Gastrocnemius medialis (tissue), 4 donors: ENCODE measurements at regions of chr11 and their contacts with region 1.

Region 1: DNA sequence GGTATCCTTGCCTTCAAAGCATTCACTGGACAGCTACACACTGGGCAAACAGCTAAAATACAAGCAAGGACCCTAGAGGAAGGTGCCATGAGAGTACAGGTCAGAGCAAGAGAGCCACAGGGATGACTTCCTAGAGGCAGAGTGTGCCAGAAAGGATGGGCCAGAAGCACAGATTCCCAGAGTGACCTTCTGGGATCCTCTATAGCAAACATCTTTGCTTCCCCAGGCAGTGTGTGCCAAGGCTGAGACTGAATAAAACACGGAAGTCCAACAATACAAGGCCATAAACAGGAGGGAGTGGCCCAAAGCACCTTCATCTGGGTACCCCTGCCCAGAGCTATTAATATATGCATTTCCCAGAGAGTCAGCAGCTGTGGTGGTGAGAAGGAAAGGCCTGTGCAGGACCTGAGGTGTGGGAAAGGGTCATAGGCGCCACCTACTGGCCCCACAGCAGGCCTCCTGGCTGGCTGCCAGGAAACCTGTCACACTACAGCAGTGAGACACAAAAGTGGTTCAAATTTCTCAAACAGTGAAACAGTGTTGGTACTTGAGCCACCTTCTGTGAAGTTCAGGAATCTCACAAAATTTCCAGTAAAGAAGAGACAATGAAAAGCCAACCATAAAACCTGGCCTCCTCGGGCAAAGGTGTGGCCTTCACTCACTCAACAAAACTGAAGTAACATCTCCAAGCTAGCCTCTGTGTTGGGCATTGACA is 20.3 kb downstream of the CLPB start:
- DNase-seq: peak; percentile 70 to 77
- ATAC-seq: peak; percentile 82 to 93
- H3K4me3 ChIP-seq: no peak overlapping the region
- H3K27ac ChIP-seq: peak overlapping the region in 1 of 4 donors; percentile 45
- H3K4me1 ChIP-seq: peaks cover 11 to 17% of the 10 kb centered on the region in 2 donors
- H3K27me3 ChIP-seq: no peaks in the 10 kb centered on the region
- CTCF ChIP-seq: peak; percentile 79 to 90 (median 82)
- POLR2A ChIP-seq: no peak

Region 2: DNA sequence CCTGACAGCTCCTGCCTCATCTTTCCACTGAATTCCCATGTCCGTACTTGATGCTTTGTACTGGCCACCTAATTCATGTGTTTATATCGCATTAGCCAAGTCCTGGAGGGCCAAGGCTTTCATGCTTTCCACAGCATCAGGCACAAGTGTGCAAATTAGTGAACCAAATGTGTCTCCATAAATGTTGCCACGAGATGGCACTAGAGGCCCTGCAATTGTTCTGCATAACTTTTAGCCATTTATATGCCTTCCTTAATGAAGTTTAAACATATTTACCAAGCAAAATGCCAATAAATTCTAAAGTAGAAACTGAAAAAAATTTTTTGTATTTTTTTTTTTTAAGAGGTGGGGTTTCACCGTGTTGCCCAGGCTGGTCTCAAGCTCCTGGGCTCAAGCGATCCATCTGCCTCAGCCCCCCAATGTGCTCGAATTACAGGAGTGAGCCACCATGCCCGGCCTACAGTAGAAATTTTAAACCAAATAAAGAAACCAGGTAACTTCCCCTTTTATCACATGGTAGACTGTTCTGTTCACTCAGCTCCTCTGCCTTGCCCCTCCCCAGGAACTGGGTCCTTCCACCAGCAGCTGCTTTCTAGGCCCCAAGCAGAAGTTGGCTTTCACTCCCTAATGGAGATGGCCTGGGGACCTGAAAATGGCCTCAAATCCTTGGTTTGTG is 436.2 kb before region 1 on chr11:
- in situ Hi-C with region 1: loop called in 1 of 4 experiments (anchors 25 kb)
- intact Hi-C with region 1: loop called (anchors 10 kb)
- DNase-seq: peak in 1 of 2 donors; percentile 45
- ATAC-seq: peak; percentile 54 to 79
- H3K4me3 ChIP-seq: no peak overlapping the region
- H3K27ac ChIP-seq: no peak overlapping the region
- H3K4me1 ChIP-seq: peaks cover 3 to 8% of the 10 kb centered on the region in 2 donors
- H3K27me3 ChIP-seq: no peaks in the 10 kb centered on the region
- CTCF ChIP-seq: peak; percentile 39 to 75 (median 69)
- POLR2A ChIP-seq: no peak

Region 3: DNA sequence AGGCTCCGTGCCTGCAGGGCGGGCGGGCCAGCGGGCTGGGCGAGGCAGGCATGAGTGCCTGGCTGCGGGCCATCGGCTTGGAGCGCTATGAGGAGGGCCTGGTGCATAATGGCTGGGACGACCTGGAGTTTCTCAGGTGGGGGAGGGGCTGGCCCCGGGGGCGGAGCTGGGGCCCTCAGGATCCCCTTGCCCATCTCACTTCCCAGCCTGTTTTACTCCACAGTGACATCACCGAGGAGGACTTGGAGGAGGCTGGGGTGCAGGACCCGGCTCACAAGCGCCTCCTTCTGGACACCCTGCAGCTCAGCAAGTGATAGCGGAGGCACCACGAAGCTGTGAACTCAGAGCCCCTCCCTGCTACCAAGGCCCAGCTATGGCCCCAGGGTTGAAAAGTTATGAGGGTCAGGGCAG is 176.0 kb before region 1 on chr11:
- in situ Hi-C with region 1: no loop called
- intact Hi-C with region 1: loop called (anchors 5 kb)
- DNase-seq: peak in 1 of 2 donors; percentile 27
- ATAC-seq: no peak
- H3K4me3 ChIP-seq: no peak overlapping the region
- H3K27ac ChIP-seq: no peak overlapping the region
- H3K4me1 ChIP-seq: peaks cover 10 to 22% of the 10 kb centered on the region in 2 donors
- H3K27me3 ChIP-seq: peaks cover 8 to 17% (median 15%) of the 10 kb centered on the region in 3 donors
- CTCF ChIP-seq: peak in 4 of 5 experiments; percentile 34 to 53 (median 50)
- POLR2A ChIP-seq: no peak

Region 4: GRCh38 chr11:72328366-72329224 is 85.5 kb before region 1 on chr11:
- in situ Hi-C with region 1: no loop called
- intact Hi-C with region 1: loop called (anchors 1 kb)
- DNase-seq: no peak
- ATAC-seq: no peak
- H3K4me3 ChIP-seq: no peak overlapping the region
- H3K27ac ChIP-seq: no peak overlapping the region
- H3K4me1 ChIP-seq: peaks cover 21 to 26% of the 10 kb centered on the region in 2 donors
- H3K27me3 ChIP-seq: no peaks in the 10 kb centered on the region
- CTCF ChIP-seq: no peak
- POLR2A ChIP-seq: no peak

Region 5: GRCh38 chr11:72352859-72353551 is 61.1 kb before region 1 on chr11:
- in situ Hi-C with region 1: no loop called
- intact Hi-C with region 1: loop called (anchors 5 kb)
- DNase-seq: no peak
- ATAC-seq: no peak
- H3K4me3 ChIP-seq: no peak overlapping the region
- H3K27ac ChIP-seq: no peak overlapping the region
- H3K4me1 ChIP-seq: peaks cover 23 to 28% of the 10 kb centered on the region in 2 donors
- H3K27me3 ChIP-seq: no peaks in the 10 kb centered on the region
- CTCF ChIP-seq: no peak
- POLR2A ChIP-seq: no peak